ENCODE measurements at regions of chr20 and their contacts with region 1.

Region 1: GRCh38 chr20:17536944-17537444 is 5.8 kb upstream of the BFSP1 start:
- DNase-seq: no peak
- H3K4me3 ChIP-seq: no peak overlapping the region
- CTCF ChIP-seq: peak; percentile 87

Region 2: GRCh38 chr20:17485017-17485416 is 52.0 kb before region 1 on chr20:
- CTCF ChIA-PET with region 1: no interaction called
- POLR2A ChIA-PET with region 1: no interaction called
- DNase-seq: no peak
- H3K4me3 ChIP-seq: no peak overlapping the region
- CTCF ChIP-seq: no peak

Region 3: GRCh38 chr20:17569616-17570346 is 32.8 kb after region 1 on chr20 and contains the start of gene DSTN:
- CTCF ChIA-PET with region 1: interaction called, 43 read pairs
- POLR2A ChIA-PET with region 1: interaction called, 26 read pairs
- DNase-seq: peak; percentile 86
- H3K4me3 ChIP-seq: peak within 1 kb of the TSS; percentile 82
- CTCF ChIP-seq: no peak

Region 4: GRCh38 chr20:17594443-17594842 is 57.4 kb after region 1 on chr20:
- CTCF ChIA-PET with region 1: interaction called, 18 read pairs
- POLR2A ChIA-PET with region 1: interaction called, 4 read pairs
- DNase-seq: peak; percentile 51
- H3K4me3 ChIP-seq: no peak overlapping the region
- CTCF ChIP-seq: no peak

Region 5: GRCh38 chr20:17611540-17612286 is 74.7 kb after region 1 on chr20:
- CTCF ChIA-PET with region 1: interaction called, 25 read pairs
- POLR2A ChIA-PET with region 1: interaction called, 3 read pairs
- DNase-seq: no peak
- H3K4me3 ChIP-seq: no peak overlapping the region
- CTCF ChIP-seq: no peak

Region 6: DNA sequence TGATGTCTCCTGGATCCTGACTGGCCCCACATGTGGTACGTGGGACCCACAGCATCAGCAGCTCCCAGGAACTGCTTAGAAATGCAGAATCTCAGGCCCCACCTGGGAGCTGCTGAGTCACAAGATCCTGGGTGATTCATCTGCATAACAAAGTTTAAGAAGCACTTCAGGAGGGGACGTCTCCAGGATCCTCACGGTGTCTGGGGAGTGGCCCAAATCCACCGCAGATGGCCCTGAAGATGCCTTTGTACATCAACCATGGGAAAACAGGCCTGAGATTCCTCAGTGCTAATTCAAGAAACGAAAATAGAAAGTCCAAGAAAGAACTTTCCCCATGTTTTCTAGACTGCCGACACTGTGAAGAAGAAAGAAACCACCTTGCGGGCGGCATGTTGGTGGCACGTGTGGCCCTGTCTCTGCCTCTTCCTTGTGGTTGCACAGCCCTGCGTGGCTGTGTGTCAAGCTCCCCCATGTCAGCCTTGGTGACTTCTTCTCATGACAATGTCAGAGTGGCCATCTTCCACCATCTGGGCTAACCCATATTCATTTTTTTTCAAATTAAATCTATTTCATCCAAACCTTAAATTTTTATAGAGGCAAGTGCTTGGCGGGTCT is 119.0 kb after region 1 on chr20:
- CTCF ChIA-PET with region 1: no interaction called
- POLR2A ChIA-PET with region 1: no interaction called
- DNase-seq: no peak
- H3K4me3 ChIP-seq: no peak overlapping the region
- CTCF ChIP-seq: no peak